T-cell (primary cell): ENCODE measurements at regions of chr12 and their contacts with region 1.

Region 1: DNA sequence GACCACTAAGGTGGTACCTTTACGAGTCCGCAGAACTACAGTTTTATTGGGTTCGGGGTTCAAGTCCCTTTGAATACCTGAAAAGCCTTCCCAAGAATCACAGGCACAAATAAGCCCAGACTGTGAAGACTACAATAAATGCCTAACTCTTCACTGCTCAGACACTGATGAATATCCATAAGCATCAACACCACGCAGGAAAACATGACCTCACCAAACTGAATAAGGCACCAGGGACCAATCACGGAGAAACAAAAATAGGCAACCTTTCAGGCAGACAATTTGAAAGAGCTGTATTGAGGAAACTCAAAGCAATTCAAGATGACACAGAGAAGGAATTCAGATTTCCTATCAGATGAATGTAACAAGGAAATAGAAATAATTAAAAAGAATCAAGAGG is 24.2 kb upstream of the P2RX7 start:
- DNase-seq: no peak
- ATAC-seq: no peak
- H3K4me3 ChIP-seq: no peak overlapping the region
- H3K4me3 Mint-ChIP-seq: no peak overlapping the region
- H3K27ac ChIP-seq: no peak overlapping the region
- H3K27ac Mint-ChIP-seq: no peak overlapping the region
- H3K4me1 ChIP-seq: no peaks in the 10 kb centered on the region
- H3K4me1 Mint-ChIP-seq: peaks cover 2 to 6% (median 3%) of the 10 kb centered on the region in 3 donors
- H3K27me3 ChIP-seq: no peaks in the 10 kb centered on the region
- H3K27me3 Mint-ChIP-seq: no peaks in the 10 kb centered on the region

Region 2: DNA sequence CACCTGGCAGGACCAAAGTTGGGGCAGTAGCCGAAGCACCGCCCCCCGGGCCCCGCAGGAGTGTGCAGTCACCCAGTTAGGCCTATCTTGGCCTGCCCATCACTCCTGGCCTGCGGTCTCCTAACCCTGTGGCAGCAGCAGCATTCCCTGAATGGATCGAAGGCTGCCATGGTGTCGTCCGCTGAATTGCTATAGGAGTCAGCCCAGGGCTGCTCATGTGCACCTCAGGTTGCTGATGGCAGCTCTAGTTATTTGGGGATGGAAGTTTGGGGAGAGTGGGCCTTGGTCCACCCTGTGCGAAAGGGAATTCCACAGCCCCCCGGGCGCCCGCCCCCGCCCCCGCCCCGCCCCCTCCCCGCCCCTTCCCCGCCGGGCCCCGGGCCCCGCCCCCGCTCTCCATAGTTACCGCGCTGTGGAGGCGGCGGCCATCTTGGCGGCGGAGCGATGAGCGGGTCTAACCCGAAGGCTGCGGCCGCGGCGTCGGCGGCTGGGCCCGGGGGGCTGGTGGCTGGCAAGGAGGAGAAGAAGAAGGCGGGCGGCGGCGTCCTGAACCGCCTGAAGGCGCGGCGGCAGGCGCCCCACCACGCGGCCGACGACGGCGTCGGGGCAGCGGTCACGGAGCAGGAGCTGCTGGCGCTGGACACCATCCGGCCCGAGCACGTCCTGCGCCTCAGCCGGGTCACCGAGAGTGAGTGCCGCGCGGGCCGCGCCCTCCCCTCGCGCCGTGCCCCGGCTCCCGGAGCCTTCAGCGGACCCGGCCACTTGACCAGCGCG is 398.3 kb before region 1 on chr12 and contains the start of gene UNC119B:
- CTCF ChIA-PET with region 1: interaction called in 1 of 2 experiments, 13 read pairs
- POLR2A ChIA-PET with region 1: no interaction called
- DNase-seq: peak; percentile 30 to 83 (median 64)
- ATAC-seq: peak; percentile 90 to 94 (median 92)
- H3K4me3 ChIP-seq: peak within 1 kb of the TSS; percentile 62 to 89
- H3K4me3 Mint-ChIP-seq: peak within 1 kb of the TSS; percentile 87 to 90 (median 88)
- H3K27ac ChIP-seq: peak within 1 kb of the TSS; percentile 46
- H3K27ac Mint-ChIP-seq: peak within 1 kb of the TSS; percentile 88 to 90
- H3K4me1 ChIP-seq: peaks cover 5 to 23% of the 10 kb centered on the region in 2 experiments
- H3K4me1 Mint-ChIP-seq: peaks cover 34 to 45% (median 39%) of the 10 kb centered on the region in 3 donors
- H3K27me3 ChIP-seq: no peaks in the 10 kb centered on the region
- H3K27me3 Mint-ChIP-seq: no peaks in the 10 kb centered on the region
- total RNA-seq, gene UNC119B: 14.3 to 26.1 (median 22.6) TPM

Region 3: DNA sequence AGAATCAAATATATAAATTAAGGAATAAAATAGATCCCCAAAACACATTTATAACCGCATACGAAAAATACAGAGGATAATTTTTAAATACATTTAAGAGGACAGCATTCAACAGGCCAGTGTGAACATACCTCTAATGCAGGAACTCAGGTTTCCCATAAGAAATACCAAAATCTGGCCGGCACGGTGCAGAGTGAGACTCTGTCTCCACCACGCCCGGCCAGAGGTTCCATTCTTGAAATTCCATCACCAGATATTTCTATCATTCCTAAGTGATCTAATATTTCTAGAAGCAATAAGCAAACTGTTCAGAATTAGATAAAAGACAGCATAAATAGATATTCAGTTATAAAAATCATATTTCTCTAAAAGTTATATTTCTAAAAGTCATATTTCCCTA is 39.3 kb before region 1 on chr12:
- CTCF ChIA-PET with region 1: no interaction called
- POLR2A ChIA-PET with region 1: no interaction called
- DNase-seq: no peak
- ATAC-seq: no peak
- H3K4me3 ChIP-seq: no peak overlapping the region
- H3K4me3 Mint-ChIP-seq: no peak overlapping the region
- H3K27ac ChIP-seq: no peak overlapping the region
- H3K27ac Mint-ChIP-seq: no peak overlapping the region
- H3K4me1 ChIP-seq: no peaks in the 10 kb centered on the region
- H3K4me1 Mint-ChIP-seq: peaks cover 4 to 7% (median 6%) of the 10 kb centered on the region in 3 donors
- H3K27me3 ChIP-seq: no peaks in the 10 kb centered on the region
- H3K27me3 Mint-ChIP-seq: no peaks in the 10 kb centered on the region